Activated CD4-positive, alpha-beta memory T cell treated with anti-CD3 and anti-CD28 coated beads, Interleukin-2, amount 10 ng/mL, durations not matched to agents 7 days and 5 days (primary cell): ENCODE measurements at regions of chr4 and their contacts with region 1.

Region 1: GRCh38 chr4:139083956-139084803 is 68.6 kb downstream of the NOCT start:
- DNase-seq: peak; percentile 86
- H3K4me3 Mint-ChIP-seq: peak overlapping the region; percentile 80
- H3K27ac Mint-ChIP-seq: peak overlapping the region; percentile 98
- H3K4me1 Mint-ChIP-seq: peaks cover 39% of the 10 kb centered on the region
- H3K27me3 Mint-ChIP-seq: no peaks in the 10 kb centered on the region

Region 2: DNA sequence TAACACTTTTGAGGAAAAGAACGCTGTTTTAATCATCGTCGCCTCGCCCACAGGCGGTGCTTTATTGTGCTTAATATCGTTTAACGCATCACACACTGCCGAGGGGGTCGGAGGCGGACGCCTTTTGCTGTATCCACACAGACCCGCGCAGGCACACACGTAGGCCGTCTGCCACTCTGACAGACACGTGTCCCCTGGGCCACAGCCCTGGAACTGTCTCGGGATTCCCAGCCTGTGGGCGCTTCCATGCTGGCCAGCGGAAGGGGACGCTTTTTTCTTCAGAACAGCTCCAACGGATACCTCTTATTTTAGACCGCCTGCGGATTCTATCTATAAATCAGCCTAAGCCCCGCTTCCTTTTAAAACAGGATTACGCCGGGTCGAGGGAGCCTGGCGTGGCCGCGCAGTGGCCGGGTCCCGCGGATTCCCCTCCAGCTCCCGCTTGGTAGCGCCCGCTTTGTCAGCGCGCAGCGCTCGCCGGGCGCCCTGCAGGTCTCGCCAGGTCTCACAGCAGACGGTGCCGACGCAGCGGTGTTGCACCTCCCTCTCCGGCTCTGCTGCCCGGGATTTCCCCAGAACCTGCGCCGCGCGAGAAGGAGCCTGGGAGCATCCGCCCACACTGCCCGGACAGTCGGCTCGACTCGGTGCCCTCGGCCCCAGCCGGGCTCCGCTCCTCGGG is 68.8 kb before region 1 on chr4 and contains the start of gene NOCT:
- CTCF ChIA-PET with region 1: interaction called, 8 read pairs
- POLR2A ChIA-PET with region 1: interaction called, 20 read pairs
- DNase-seq: peak; percentile 91
- H3K4me3 Mint-ChIP-seq: peak within 1 kb of the TSS; percentile 87
- H3K27ac Mint-ChIP-seq: peak within 1 kb of the TSS; percentile 87
- H3K4me1 Mint-ChIP-seq: peaks cover 33% of the 10 kb centered on the region
- H3K27me3 Mint-ChIP-seq: no peaks in the 10 kb centered on the region
- total RNA-seq, gene NOCT: 4.5 to 5.4 TPM

Region 3: GRCh38 chr4:139266583-139267257 is 182.5 kb after region 1 on chr4:
- CTCF ChIA-PET with region 1: no interaction called
- POLR2A ChIA-PET with region 1: interaction called, 11 read pairs
- DNase-seq: peak; percentile 88
- H3K4me3 Mint-ChIP-seq: peak overlapping the region; percentile 59
- H3K27ac Mint-ChIP-seq: peak overlapping the region; percentile 60
- H3K4me1 Mint-ChIP-seq: peaks cover 32% of the 10 kb centered on the region
- H3K27me3 Mint-ChIP-seq: peaks cover 14% of the 10 kb centered on the region